ENCODE measurements at regions of chr10 and their contacts with region 1.

Region 1: DNA sequence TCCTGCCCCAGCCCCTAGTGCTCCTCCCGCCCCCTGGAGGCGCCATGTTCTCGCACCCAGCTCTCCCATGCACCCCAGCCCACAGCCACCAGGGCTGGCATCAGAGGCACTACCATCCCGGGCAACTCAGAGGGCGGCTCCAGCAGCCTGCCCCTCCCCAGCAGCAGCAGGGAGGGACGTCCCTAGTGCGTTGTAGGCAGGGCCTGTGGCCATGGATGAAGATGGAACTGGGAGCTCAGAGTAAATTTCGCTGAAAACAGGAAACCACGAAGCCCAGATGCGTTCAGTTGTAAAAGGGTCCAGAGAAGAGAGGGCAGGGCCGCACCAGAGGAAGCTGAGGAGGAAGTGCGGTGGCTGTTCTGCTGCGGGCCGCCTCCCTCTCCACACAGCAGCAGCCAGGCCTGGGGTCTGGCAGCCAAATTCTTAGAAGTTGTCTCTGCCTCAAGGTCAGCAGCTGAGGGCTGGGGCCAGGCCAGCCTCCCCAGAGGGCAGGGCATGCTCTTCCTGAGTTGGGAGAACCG is 24.6 kb downstream of the VSIR start:
- DNase-seq: peak; percentile 53
- ATAC-seq: peak; percentile 77
- H3K4me3 Mint-ChIP-seq: peak overlapping the region; percentile 69
- H3K27ac Mint-ChIP-seq: peak overlapping the region; percentile 95
- H3K4me1 Mint-ChIP-seq: peaks cover 81% of the 10 kb centered on the region
- H3K27me3 Mint-ChIP-seq: no peaks in the 10 kb centered on the region
- CTCF ChIP-seq: no peak

Region 2: DNA sequence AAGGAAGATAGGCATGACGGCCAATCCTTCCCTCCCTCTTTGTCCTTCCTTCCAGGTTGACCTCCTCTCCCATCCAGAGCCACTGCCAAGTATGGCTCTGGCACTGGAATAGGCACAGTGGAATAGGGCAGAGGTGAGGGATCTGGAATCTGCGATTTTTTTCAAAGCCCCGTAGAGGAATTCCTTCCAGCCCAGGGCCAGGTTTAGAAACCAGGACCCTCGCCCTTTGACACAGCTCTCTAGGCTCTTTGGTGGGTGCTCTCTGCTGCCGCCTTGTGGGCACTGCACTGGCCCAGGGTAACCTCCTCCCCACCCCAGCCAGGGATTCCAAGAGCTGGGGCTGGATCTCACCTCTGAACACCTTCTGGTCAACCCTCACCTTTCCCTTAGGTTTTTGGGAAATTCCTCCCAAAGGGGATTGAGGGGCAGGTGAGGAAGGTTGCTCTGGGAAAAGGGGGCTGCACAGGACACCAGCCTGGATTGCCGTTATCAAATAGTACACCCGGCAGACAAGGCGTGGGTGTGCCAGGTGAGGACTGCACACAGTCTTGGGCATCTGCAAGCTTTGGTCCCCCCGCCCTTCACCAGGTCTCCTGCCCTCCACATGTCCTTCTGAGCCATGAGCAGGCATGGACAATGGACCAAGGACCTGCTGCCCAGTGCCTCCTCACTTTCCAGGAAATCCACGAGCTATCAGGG is 52.0 kb before region 1 on chr10:
- CTCF ChIA-PET with region 1: no interaction called
- POLR2A ChIA-PET with region 1: interaction called, 15 read pairs
- intact Hi-C with region 1: loop called (anchors 5 kb)
- DNase-seq: peak; percentile 59
- ATAC-seq: no peak
- H3K4me3 Mint-ChIP-seq: no peak overlapping the region
- H3K27ac Mint-ChIP-seq: no peak overlapping the region
- H3K4me1 Mint-ChIP-seq: peaks cover 63% of the 10 kb centered on the region
- H3K27me3 Mint-ChIP-seq: no peaks in the 10 kb centered on the region
- CTCF ChIP-seq: peak; percentile 27

Region 3: GRCh38 chr10:71766702-71767419 is 18.1 kb after region 1 on chr10:
- CTCF ChIA-PET with region 1: interaction called, 4 read pairs
- POLR2A ChIA-PET with region 1: interaction called, 21 read pairs
- intact Hi-C with region 1: loop called (anchors 1 kb)
- DNase-seq: no peak
- ATAC-seq: peak; percentile 16
- H3K4me3 Mint-ChIP-seq: peak overlapping the region; percentile 55
- H3K27ac Mint-ChIP-seq: peak overlapping the region; percentile 91
- H3K4me1 Mint-ChIP-seq: peaks cover 79% of the 10 kb centered on the region
- H3K27me3 Mint-ChIP-seq: no peaks in the 10 kb centered on the region
- CTCF ChIP-seq: no peak